ENCODE measurements at regions of chr17 and their contacts with region 1.

Region 1: GRCh38 chr17:55549140-55549539 is 37.9 kb upstream of the SMIM36 start:
- DNase-seq: no peak
- H3K4me3 Mint-ChIP-seq: no peak overlapping the region
- H3K27ac Mint-ChIP-seq: no peak overlapping the region
- H3K4me1 Mint-ChIP-seq: peaks cover 24% of the 10 kb centered on the region
- H3K27me3 Mint-ChIP-seq: peaks cover 2% of the 10 kb centered on the region

Region 2: GRCh38 chr17:55177159-55177854 is 371.8 kb before region 1 on chr17:
- CTCF ChIA-PET with region 1: no interaction called
- POLR2A ChIA-PET with region 1: no interaction called
- intact Hi-C with region 1: no loop called
- DNase-seq: no peak
- H3K4me3 Mint-ChIP-seq: no peak overlapping the region
- H3K27ac Mint-ChIP-seq: no peak overlapping the region
- H3K4me1 Mint-ChIP-seq: no peaks in the 10 kb centered on the region
- H3K27me3 Mint-ChIP-seq: no peaks in the 10 kb centered on the region

Region 3: DNA sequence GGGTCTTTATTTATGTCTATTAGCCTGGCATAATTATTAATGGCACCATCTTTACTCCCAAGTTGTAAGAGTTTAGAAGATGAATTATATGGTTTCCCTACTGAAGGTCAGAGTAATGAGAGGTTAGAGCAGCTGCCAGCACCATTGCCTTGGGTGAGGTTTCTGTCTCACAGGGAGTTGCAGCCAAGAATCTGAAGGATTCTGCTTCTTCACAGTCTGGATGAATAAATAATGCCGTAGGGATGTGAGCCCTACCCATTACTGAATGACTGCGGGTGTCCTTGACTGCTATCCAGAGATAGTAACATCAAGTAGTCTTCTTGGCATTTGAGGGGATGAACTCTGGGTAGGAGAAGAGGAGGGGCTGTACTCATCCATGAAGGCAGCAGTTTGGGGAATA is 14.9 kb after region 1 on chr17:
- CTCF ChIA-PET with region 1: interaction called, 4 read pairs
- POLR2A ChIA-PET with region 1: no interaction called
- intact Hi-C with region 1: loop called (anchors 1 kb)
- DNase-seq: no peak
- H3K4me3 Mint-ChIP-seq: no peak overlapping the region
- H3K27ac Mint-ChIP-seq: no peak overlapping the region
- H3K4me1 Mint-ChIP-seq: peaks cover 33% of the 10 kb centered on the region
- H3K27me3 Mint-ChIP-seq: peaks cover 5% of the 10 kb centered on the region

Region 4: GRCh38 chr17:55717898-55718735 is 169.0 kb after region 1 on chr17:
- CTCF ChIA-PET with region 1: interaction called, 3 read pairs
- POLR2A ChIA-PET with region 1: no interaction called
- intact Hi-C with region 1: loop called (anchors 1 kb)
- DNase-seq: peak; percentile 74
- H3K4me3 Mint-ChIP-seq: no peak overlapping the region
- H3K27ac Mint-ChIP-seq: no peak overlapping the region
- H3K4me1 Mint-ChIP-seq: no peaks in the 10 kb centered on the region
- H3K27me3 Mint-ChIP-seq: peaks cover 25% of the 10 kb centered on the region

Measured in activated CD4-positive, alpha-beta memory T cell treated with anti-CD3 and anti-CD28 coated beads for 36 hours (primary cell).